ENCODE measurements at regions of chr15 and their contacts with region 1.

Region 1: DNA sequence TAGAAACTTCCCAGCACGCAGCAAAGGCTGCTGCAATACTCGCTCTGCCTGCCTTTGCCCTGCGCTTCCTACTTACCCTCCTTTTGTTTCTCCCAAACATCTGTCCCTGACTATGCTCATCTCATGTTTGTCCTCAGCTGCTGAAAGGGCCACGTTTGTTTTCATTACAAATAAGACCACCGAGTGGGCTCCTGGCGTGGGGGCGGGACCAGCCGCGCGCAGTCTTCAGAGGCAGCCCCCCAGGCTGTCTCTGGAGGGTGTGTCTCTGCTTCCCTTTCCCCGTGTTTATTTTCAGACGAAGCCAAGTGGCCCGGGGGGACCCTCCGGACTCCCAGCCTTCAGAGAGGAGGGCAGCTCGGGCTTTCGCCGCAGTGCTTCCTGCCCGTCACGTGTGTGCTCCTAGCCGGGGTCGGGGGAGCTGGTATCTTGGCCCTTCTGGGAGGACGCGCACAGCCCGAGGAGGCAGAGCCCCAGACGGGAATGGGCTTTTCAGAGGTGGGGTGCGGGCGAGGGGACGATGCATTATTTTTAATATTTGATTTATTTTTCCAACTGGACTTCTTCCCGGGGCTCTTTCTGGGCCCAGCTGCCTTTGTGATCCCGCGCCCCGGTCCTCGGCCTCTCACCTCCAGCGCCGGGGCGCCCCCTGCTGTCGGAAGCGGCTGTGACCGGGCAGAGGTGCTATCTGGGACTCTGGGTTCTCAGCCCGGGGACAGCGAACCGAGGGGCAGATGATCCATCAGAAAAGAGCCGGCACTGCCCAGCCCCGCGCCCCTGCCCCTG is 70.0 kb upstream of the CGNL1 start:
- DNase-seq: peak; percentile 88 to 91 (median 89)
- ATAC-seq: peak; percentile 94 to 95 (median 94)
- H3K4me3 ChIP-seq: peak overlapping the region; percentile 51 to 61 (median 58)
- H3K27ac ChIP-seq: no peak overlapping the region
- H3K4me1 ChIP-seq: peaks cover 0 to 18% (median 5%) of the 10 kb centered on the region in 4 donors
- H3K27me3 ChIP-seq: no peaks in the 10 kb centered on the region
- CTCF ChIP-seq: peak; percentile 81 to 92 (median 88)
- POLR2A ChIP-seq: no peak

Region 2: DNA sequence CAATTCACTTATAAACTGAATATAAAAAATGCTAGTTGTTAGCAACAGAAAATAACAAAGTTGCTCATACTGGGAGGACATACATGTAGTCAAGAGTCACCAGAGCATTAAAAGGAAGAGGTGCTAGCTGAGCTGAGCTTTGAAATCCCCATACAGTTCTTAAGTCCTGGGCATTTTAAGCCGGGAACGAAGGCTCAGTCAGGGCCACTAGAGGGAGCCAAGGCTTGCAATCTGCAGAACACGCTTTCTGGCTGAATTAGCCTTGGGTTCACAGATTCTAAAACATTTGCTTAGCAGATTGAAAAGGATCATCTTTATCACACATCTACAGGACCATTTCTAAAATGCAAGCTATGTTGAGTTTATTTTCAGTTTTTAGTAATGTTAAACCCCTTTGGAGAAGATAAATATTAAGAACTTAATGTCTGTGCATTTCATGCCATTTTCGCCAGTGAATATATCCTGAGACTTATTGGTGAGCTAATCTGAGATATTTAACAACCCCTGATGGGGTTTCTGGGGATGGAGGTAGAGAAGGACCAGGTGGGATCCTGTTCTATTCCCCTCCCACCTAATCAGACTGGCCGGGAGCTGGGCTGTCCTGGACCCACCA is 815.1 kb before region 1 on chr15:
- intact Hi-C with region 1: loop called in 1 of 2 experiments (anchors 10 kb)
- DNase-seq: peak in 2 of 3 donors; percentile 56 to 68
- ATAC-seq: peak; percentile 89 to 94 (median 90)
- H3K4me3 ChIP-seq: no peak overlapping the region
- H3K27ac ChIP-seq: no peak overlapping the region
- H3K4me1 ChIP-seq: no peaks in the 10 kb centered on the region
- H3K27me3 ChIP-seq: no peaks in the 10 kb centered on the region
- CTCF ChIP-seq: peak; percentile 62 to 91 (median 88)
- POLR2A ChIP-seq: no peak

Region 3: DNA sequence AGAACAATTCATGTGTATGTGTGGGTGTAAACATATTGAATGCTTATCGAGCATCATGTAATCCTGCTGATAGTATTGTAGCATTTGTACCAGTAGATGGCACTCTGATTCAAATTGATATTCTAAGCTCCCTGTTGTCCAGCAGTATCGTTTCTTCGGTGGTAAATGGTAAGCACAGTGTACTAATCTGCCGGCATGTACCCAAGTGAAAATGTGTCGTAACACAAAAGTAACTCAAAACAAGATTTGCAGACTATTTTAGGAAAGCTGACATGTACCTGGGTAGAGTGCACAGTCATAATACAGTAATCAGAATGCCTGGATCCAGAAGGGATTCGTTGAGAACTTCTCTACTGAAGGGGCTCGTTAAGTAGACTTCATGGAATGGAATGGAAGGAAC is 809.7 kb before region 1 on chr15:
- intact Hi-C with region 1: loop called (anchors 10 kb)
- DNase-seq: no peak
- ATAC-seq: peak; percentile 94 to 98 (median 94)
- H3K4me3 ChIP-seq: no peak overlapping the region
- H3K27ac ChIP-seq: no peak overlapping the region
- H3K4me1 ChIP-seq: no peaks in the 10 kb centered on the region
- H3K27me3 ChIP-seq: no peaks in the 10 kb centered on the region
- CTCF ChIP-seq: peak; percentile 69 to 80 (median 78)
- POLR2A ChIP-seq: no peak

Region 4: DNA sequence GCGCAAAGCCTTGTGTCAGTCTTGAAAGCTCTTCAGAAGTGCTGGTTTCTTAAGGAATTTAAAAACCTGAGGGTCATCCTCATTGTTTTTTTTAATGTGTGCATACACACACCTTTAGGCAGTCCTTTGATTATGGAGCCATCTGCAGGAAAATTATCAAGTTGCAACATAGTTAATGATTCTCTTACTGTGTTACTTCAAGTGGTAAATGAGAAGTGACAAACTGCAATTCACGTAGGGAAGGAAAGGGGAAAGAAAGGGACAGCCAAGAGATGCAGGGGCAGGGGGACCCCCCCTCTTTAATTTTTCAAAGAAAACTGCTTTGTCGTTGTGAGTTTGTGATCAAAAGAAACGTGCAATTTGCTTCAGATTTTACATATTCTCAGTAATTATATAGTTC is 92.5 kb before region 1 on chr15:
- intact Hi-C with region 1: no loop called
- DNase-seq: no peak
- ATAC-seq: peak; percentile 85 to 92 (median 90)
- H3K4me3 ChIP-seq: no peak overlapping the region
- H3K27ac ChIP-seq: no peak overlapping the region
- H3K4me1 ChIP-seq: peaks cover 0 to 10% (median 0%) of the 10 kb centered on the region in 4 donors
- H3K27me3 ChIP-seq: no peaks in the 10 kb centered on the region
- CTCF ChIP-seq: peak; percentile 48 to 64 (median 61)
- POLR2A ChIP-seq: no peak

Measured in right lobe of liver (tissue), 6 donors.